ENCODE measurements at regions of chr16 and their contacts with region 1.

Region 1: DNA sequence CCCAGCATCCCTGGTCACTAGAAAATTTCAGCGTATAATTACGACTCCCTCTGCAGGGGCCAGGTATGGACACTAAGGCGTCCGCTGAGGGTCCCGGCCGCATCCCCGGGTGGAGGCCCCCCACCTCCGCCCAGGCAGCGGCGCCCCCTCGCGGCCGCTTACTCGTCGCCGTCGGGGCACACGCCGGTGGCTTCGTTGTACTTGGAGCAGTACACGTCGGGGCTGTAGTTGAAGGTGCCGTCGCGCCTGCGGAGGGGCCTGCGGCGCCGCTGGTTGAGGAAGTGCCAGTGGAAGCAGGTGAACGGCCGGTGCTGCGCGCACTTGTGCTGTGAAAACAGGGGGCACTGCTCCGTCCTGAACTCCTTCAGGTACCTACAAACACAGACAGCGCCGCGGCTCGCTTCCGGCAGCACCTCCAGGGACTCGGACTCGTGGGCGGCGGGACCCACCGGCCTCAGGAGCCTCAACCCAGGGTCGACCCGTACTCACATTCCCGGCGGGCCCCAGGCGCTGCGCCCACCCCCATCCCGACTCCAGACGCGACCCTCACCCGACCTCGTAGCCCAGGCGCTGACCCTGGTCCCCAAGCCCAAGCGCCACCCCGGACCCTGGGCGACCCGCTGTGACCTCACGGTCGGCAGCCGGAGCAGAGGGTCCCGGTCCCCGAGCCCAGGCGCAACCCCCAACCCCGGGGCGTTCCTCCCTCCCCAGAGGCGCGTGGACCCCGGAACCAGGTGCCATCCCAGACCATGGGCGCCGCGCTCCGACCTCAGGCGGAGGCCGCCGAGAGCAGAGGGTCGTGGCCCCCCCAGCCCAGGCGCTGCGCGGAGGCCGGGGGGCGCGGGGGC is 596 bp downstream of the UNKL start:
- DNase-seq: peak; percentile 81
- H3K4me3 ChIP-seq: peak overlapping the region; percentile 89
- H3K27ac ChIP-seq: peak overlapping the region; percentile 45
- H3K4me1 ChIP-seq: peaks cover 24% of the 10 kb centered on the region
- CTCF ChIP-seq: peak; percentile 86

Region 2: GRCh38 chr16:1308977-1309885 is 104.7 kb before region 1 on chr16 and contains the start of gene UBE2I:
- CTCF ChIA-PET with region 1: no interaction called
- POLR2A ChIA-PET with region 1: no interaction called
- intact Hi-C with region 1: loop called (anchors 10 kb)
- DNase-seq: peak; percentile 98
- H3K4me3 ChIP-seq: peak within 1 kb of the TSS; percentile 99
- H3K27ac ChIP-seq: peak within 1 kb of the TSS; percentile 86
- H3K4me1 ChIP-seq: peaks cover 24% of the 10 kb centered on the region
- CTCF ChIP-seq: no peak
- total RNA-seq, gene UBE2I: 122 and 126 TPM in 2 replicates

Region 3: DNA sequence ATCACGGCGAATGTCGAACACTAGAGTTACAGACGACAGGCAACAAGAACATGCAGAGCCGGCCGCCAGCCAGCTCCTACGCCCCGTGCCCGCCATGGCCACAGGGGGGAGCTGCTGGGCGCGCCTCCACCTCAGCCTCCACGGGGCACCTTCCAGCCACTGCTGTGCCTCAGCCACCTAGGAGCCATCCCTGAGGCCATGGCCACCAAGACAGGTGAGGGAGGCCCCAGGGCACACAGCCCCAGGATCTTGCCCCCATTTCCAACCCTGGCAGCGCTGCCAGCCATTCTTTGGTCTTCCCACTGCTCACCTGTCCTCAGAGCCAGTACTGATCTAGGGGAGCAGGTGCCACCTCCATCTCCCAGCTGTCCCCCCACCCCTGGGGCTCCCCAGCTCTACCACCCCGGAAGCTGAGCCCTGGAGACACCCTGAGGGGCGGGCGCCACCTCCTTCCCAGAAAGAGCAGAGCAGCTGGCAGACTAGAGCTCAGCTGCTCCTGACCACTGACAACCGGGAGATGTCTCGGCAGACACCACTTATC is 50.3 kb before region 1 on chr16:
- CTCF ChIA-PET with region 1: no interaction called
- POLR2A ChIA-PET with region 1: no interaction called
- intact Hi-C with region 1: loop called (anchors 5 kb)
- DNase-seq: peak; percentile 63
- H3K4me3 ChIP-seq: no peak overlapping the region
- H3K27ac ChIP-seq: no peak overlapping the region
- H3K4me1 ChIP-seq: no peaks in the 10 kb centered on the region
- CTCF ChIP-seq: peak; percentile 88

Region 4: GRCh38 chr16:1543085-1543896 is 129.4 kb after region 1 on chr16:
- CTCF ChIA-PET with region 1: no interaction called
- POLR2A ChIA-PET with region 1: no interaction called
- intact Hi-C with region 1: no loop called
- DNase-seq: peak; percentile 4
- H3K4me3 ChIP-seq: no peak overlapping the region
- H3K27ac ChIP-seq: no peak overlapping the region
- H3K4me1 ChIP-seq: no peaks in the 10 kb centered on the region
- CTCF ChIP-seq: no peak